ENCODE measurements at regions of chr2 and their contacts with region 1.

Region 1: GRCh38 chr2:144201868-144202468 is 318.0 kb downstream of the ZEB2 start:
- DNase-seq: no peak
- CTCF ChIP-seq: no peak

Region 2: GRCh38 chr2:144183727-144184126 is 18.2 kb before region 1 on chr2:
- CTCF ChIA-PET with region 1: interaction called, 18 read pairs
- POLR2A ChIA-PET with region 1: no interaction called
- DNase-seq: peak; percentile 22
- CTCF ChIP-seq: no peak

Region 3: DNA sequence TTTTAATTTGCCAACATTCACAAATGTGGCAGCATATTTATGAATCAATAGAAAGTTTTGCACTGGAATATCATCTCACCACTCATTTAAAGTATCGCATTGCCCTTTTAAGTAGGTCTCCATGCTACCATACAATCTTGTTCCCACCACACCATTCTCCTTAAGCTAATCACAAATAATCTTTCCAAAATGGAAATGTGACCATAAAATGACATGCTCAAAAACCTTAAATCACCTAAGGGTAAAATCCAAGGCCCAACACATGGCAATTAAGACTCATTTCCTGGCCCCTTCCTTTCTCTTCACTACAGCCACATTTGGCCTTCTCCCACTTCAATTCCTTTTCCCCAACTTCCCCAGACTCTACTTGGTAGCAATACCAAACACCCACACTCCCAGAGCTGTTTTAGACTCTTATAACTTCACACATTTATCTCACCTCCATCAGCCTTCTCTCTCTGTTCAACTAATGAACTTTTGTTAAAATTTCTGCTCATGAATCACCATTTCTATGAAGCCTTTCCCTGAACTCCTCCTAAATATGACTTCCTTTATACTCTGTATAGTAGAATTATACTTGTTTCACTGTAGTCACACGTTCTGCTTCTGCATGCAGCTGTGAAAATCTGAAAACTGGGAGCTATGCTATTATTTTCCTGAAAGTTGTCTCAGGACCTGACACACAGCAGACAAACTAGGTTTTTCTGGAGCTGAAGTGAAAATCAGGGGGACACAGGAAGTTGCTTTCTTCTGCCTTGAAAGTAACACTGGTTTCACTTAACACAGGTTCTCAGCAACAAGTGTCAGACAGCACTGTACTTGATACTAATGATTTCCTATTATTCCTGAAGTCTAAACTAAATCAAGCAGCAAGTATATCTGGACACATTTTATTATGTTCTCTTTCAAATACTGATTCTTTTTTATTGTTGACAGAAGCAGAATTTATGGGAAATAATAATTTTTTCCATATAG is 14.0 kb after region 1 on chr2:
- CTCF ChIA-PET with region 1: interaction called, 15 read pairs
- POLR2A ChIA-PET with region 1: no interaction called
- DNase-seq: peak; percentile 32
- CTCF ChIP-seq: no peak

Region 4: DNA sequence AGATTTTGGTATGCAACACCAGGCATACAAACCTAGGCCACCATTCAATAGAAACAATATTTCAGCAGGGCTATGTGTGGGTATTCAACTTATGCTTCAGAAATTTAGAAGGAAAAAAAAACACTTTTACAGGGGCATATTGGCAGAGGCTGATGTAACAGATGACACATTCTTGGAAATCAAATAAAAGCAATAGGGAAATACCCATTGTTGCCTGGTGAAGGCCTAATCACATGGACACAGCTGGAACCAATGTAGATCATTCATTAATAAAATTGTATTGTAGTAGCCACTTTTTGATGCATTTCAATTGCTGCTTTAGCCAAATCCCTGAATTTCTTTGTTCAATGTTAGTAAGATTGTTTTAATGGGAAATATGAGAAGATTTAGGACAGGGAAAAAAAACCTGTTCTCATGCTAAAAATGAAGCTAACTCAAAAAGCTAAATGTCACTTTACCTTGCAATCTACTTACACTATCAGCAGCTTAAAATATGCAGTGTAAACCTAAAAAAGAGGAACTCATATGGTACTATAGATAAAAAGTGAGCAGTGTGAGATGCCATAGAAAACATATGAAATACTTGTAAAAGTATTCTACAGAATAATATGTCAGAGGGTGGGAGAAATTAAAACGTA is 28.6 kb after region 1 on chr2:
- CTCF ChIA-PET with region 1: no interaction called
- POLR2A ChIA-PET with region 1: no interaction called
- DNase-seq: no peak
- CTCF ChIP-seq: no peak

Region 5: DNA sequence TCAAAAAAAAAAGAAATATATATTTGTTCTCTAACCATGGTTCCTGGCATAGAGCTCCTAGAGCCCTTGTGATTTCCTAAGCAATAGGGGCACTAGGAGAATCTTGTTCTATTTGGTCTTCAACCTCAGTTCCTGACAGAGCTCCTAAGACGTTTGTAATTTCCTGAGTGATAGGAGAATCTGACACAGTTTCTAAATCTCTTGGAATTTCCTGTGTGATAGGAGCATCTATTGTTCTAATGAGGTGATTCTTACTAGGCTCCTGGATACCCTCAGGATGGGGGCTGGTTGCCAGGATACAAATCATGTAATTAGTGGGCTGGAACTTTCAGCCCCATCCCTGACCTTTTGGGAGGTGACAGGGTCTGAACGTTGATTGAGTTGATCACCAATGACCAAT is 72.2 kb after region 1 on chr2:
- CTCF ChIA-PET with region 1: no interaction called
- POLR2A ChIA-PET with region 1: no interaction called
- DNase-seq: no peak
- CTCF ChIP-seq: no peak

Measured in GM10248 (cell line).